ENCODE measurements at regions of chr17 and their contacts with region 1.

Region 1: DNA sequence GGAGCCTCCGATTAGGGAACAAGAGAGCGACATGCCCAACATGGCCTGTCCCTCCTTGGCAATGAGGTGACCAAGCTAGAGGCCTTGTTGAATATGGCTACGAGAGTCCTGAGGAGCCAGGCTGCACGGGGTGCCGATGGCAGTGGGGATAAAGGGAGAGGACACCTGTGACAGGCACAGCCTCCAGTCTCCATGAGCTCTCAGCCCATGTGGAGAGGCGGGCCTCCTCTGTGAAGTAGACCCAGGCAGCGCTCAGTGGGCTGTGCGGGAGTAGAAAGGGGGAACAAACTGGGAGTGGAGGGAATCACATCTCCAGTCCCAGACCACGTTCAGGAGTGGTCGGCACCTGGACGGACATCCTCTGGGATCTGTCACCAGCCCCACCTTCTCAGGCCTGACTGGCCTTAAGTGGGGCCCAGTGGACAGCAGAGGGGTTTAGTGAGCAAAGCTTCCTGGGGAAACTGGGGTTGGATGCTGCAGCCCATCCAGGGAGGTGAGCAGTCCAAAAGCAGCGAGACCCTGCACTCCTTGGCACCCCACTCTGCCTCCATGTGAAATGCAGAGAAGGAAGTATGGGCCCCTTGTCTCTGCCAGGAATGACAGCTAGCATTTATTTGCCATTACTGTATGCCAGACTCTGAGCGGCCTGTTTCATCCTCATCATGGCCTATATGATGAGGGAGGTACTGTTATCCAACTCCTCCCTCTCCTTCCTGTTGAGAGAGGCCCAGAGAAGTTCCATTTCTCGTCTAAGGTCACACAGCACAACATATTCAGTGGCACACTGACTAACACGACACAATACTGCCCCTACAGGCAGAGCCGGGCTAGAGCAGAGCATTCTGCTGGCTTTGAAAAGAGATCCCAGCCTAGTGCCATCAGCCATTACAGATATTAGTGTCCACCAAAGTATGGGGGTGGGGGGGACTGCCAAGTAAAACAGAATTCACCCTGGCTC is 4.5 kb upstream of the TMEM92 start:
- DNase-seq: peak in 4 of 6 donors; percentile 32 to 76 (median 60)
- ATAC-seq: peak; percentile 47 to 64 (median 59)
- H3K4me3 ChIP-seq: no peak overlapping the region
- H3K27ac ChIP-seq: no peak overlapping the region
- H3K4me1 ChIP-seq: no peaks in the 10 kb centered on the region
- H3K27me3 ChIP-seq: no peaks in the 10 kb centered on the region
- CTCF ChIP-seq: peak; percentile 19 to 62 (median 48)

Region 2: GRCh38 chr17:49667854-49668253 is 601.9 kb before region 1 on chr17:
- intact Hi-C with region 1: no loop called
- DNase-seq: no peak
- ATAC-seq: no peak
- H3K4me3 ChIP-seq: no peak overlapping the region
- H3K27ac ChIP-seq: no peak overlapping the region
- H3K4me1 ChIP-seq: peaks cover 0 to 21% (median 15%) of the 10 kb centered on the region in 3 donors
- H3K27me3 ChIP-seq: no peaks in the 10 kb centered on the region
- CTCF ChIP-seq: no peak

Region 3: DNA sequence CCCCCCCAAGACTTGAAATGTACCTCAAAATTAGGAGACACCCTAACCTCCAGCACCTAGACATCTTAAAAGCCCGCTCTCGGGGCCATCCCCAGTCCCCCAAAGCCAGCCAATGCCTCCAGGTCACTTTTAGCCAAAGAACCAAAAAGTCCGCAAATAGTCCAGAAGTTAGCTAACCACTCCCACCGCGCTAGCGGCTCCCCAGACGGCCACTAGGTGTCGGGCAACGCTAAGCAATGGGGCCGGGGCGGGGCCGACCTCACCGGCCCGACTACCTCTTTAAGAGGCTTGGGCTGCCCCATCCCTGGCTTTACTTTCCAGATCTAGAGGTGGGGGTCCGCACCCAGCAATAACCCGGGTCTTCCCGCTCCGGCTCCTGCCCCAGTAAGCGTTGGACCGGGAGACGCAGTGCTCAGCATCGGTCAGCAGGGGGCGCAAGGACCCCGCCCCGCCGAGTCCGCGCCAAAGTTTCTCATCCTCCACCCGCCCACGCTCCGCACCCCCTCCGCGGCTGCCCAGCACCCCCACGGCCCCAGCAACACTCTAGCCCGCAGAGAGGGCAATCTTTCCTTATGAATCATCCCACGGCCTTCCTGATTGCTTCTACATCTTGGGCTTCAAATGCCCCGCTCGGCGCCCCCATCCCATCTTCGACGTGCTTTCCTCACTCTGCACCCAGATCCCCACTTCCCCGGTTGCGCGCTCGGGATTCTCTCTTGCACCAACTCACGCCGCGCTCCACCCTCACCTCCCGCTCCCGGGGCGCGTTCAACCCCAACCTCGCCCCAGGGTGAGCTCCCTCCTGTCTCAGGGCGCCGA is 69.1 kb before region 1 on chr17:
- intact Hi-C with region 1: loop called in 2 of 3 experiments (anchors 2 to 5 kb)
- DNase-seq: peak; percentile 79 to 94 (median 90)
- ATAC-seq: peak; percentile 86 to 91 (median 88)
- H3K4me3 ChIP-seq: peak overlapping the region; percentile 13 to 51 (median 34)
- H3K27ac ChIP-seq: peak overlapping the region; percentile 20 to 79 (median 42)
- H3K4me1 ChIP-seq: peaks cover 0 to 4% (median 3%) of the 10 kb centered on the region in 3 donors
- H3K27me3 ChIP-seq: peaks cover 0 to 6% (median 2%) of the 10 kb centered on the region in 4 donors
- CTCF ChIP-seq: peak; percentile 95 to 100 (median 99)

Region 4: GRCh38 chr17:50213026-50214022 is 56.4 kb before region 1 on chr17:
- intact Hi-C with region 1: loop called in 1 of 3 experiments (anchors 10 kb)
- DNase-seq: no peak
- ATAC-seq: no peak
- H3K4me3 ChIP-seq: no peak overlapping the region
- H3K27ac ChIP-seq: no peak overlapping the region
- H3K4me1 ChIP-seq: no peaks in the 10 kb centered on the region
- H3K27me3 ChIP-seq: no peaks in the 10 kb centered on the region
- CTCF ChIP-seq: no peak

Measured in pancreas (tissue), 10 donors.